Sciatic nerve (tissue), 2 donors: ENCODE measurements at regions of chr15 and their contacts with region 1.

Region 1: GRCh38 chr15:60362321-60363086 is 35.3 kb downstream of the ANXA2 start:
- DNase-seq: no peak
- ATAC-seq: peak; percentile 60

Region 2: GRCh38 chr15:60444289-60444912 is 81.9 kb after region 1 on chr15:
- intact Hi-C with region 1: loop called (anchors 5 kb)
- DNase-seq: no peak
- ATAC-seq: peak; percentile 80